Posterior vena cava (tissue), 2 donors: ENCODE measurements at regions of chr22 and their contacts with region 1.

Region 1: DNA sequence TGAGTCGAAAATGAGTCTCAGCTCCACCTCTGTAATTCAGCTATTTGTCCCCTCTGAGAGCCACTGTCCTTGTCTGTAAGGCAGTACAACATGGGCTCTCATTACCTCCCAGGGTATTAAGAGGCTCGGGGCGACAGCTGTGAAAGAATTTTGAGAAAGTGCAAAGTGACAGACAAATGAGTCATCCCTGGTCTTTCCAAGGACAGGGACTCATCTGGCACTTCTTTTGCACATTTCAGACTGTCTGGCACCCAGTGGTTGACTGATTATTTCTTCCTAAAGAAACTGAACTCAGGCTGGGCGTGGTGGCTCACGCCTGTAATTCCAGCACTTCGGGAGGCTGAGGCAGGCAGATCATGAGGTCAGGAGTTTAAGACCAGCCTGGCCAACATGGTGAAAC is 62.1 kb upstream of the ARFGAP3 start:
- DNase-seq: no peak

Region 2: GRCh38 chr22:42879371-42880021 is 39.7 kb before region 1 on chr22:
- intact Hi-C with region 1: loop called in 1 of 2 experiments (anchors 5 kb)
- DNase-seq: peak; percentile 55